Panc1 (cell line): ENCODE measurements at regions of chr11 and their contacts with region 1.

Region 1: GRCh38 chr11:102390667-102391465 is 43.9 kb downstream of the BIRC2 start:
- DNase-seq: peak; percentile 60
- ATAC-seq: peak; percentile 75
- H3K4me3 ChIP-seq: no peak overlapping the region
- H3K27ac ChIP-seq: peak overlapping the region; percentile 8
- H3K4me1 ChIP-seq: peaks cover 21% of the 10 kb centered on the region
- H3K27me3 ChIP-seq: no peaks in the 10 kb centered on the region
- CTCF ChIP-seq: peak; percentile 96

Region 2: GRCh38 chr11:101987370-101987769 is 403.5 kb before region 1 on chr11:
- CTCF ChIA-PET with region 1: no interaction called
- POLR2A ChIA-PET with region 1: no interaction called
- in situ Hi-C with region 1: no loop called
- intact Hi-C with region 1: no loop called
- DNase-seq: no peak
- ATAC-seq: no peak
- H3K4me3 ChIP-seq: no peak overlapping the region
- H3K27ac ChIP-seq: no peak overlapping the region
- H3K4me1 ChIP-seq: no peaks in the 10 kb centered on the region
- H3K27me3 ChIP-seq: no peaks in the 10 kb centered on the region
- CTCF ChIP-seq: peak; percentile 27; the same call in 1 of the 2 replicates

Region 3: GRCh38 chr11:102279641-102280170 is 111.2 kb before region 1 on chr11:
- CTCF ChIA-PET with region 1: interaction called, 11 read pairs
- POLR2A ChIA-PET with region 1: no interaction called
- in situ Hi-C with region 1: no loop called
- intact Hi-C with region 1: no loop called
- DNase-seq: no peak
- ATAC-seq: peak; percentile 75
- H3K4me3 ChIP-seq: peak overlapping the region; percentile 14 to 41
- H3K27ac ChIP-seq: peak overlapping the region; percentile 52
- H3K4me1 ChIP-seq: peaks cover 11% of the 10 kb centered on the region
- H3K27me3 ChIP-seq: no peaks in the 10 kb centered on the region
- CTCF ChIP-seq: peak; percentile 54

Region 4: GRCh38 chr11:104033134-104033533 is 1642.3 kb after region 1 on chr11:
- CTCF ChIA-PET with region 1: no interaction called
- POLR2A ChIA-PET with region 1: interaction called, 10 read pairs
- in situ Hi-C with region 1: no loop called
- intact Hi-C with region 1: no loop called
- DNase-seq: no peak
- ATAC-seq: no peak
- H3K4me3 ChIP-seq: no peak overlapping the region
- H3K27ac ChIP-seq: no peak overlapping the region
- H3K4me1 ChIP-seq: no peaks in the 10 kb centered on the region
- H3K27me3 ChIP-seq: no peaks in the 10 kb centered on the region
- CTCF ChIP-seq: no peak